K562 (cell line): ENCODE measurements at regions of chr11 and their contacts with region 1.

Region 1: GRCh38 chr11:2892215-2893020 is 6.8 kb upstream of the CDKN1C start:
- DNase-seq: peak; percentile 76 to 87 (median 80)
- ATAC-seq: peak; percentile 80
- H3K4me3 ChIP-seq: peak overlapping the region; percentile 34
- H3K27ac ChIP-seq: peak overlapping the region; percentile 63
- H3K4me1 ChIP-seq: peaks cover 30 to 65% of the 10 kb centered on the region in 2 experiments
- H3K27me3 ChIP-seq: no peaks in the 10 kb centered on the region
- CTCF ChIP-seq: peak; percentile 88 to 93 (median 93)
- EP300 ChIP-seq: no peak
- POLR2A ChIP-seq: peak; percentile 53
- RAD21 ChIP-seq: peak; percentile 90 to 91

Region 2: DNA sequence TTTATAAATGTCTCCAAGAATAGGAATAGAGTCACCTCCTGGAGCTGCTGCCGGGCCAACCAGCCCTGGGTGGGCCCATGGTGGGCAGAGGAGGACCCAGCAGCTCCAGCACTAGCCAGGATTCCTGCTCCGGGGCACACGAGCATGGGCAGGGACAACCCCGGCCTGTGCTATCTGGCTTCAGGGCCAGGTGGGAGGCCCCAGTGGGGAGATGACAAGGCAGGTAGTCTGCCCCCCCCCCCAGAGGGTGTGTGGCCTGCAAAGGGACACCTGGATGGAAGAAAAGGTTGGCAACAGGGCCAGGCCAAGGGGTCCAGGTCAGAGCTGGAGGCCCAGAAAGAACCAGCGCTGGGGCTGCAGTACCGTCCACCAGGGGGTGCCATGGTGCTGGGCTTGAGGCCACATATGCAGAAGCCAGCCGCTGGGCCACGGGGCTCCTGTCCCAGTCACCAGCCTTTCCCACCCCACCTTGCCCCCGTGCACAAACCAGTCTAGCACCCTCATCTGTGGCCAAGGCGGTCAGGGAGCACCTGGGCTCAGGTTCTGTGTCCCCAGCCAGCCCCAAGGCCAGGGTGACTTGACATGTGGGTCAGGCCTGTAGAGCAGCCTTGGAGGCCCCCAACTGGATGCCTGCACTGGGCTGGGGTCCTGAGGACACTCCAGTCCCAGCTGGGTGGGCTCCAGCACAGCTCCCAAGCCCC is 587.1 kb before region 1 on chr11:
- CTCF ChIA-PET with region 1: no interaction called
- POLR2A ChIA-PET with region 1: no interaction called
- in situ Hi-C with region 1: no loop called
- intact Hi-C with region 1: loop called (anchors 10 kb)
- DNase-seq: peak; percentile 66 to 88 (median 70)
- ATAC-seq: peak; percentile 81
- H3K4me3 ChIP-seq: peak overlapping the region; percentile 5; the same call in 1 of the 2 replicates
- H3K27ac ChIP-seq: peak overlapping the region; percentile 47; the same call in 2 of the 3 replicates
- H3K4me1 ChIP-seq: peaks cover 59 to 92% of the 10 kb centered on the region in 2 experiments
- H3K27me3 ChIP-seq: no peaks in the 10 kb centered on the region; a peak in 1 of 5 replicates
- CTCF ChIP-seq: peak; percentile 89 to 91 (median 91)
- EP300 ChIP-seq: no peak
- POLR2A ChIP-seq: no peak
- RAD21 ChIP-seq: peak; percentile 56 to 85

Region 3: DNA sequence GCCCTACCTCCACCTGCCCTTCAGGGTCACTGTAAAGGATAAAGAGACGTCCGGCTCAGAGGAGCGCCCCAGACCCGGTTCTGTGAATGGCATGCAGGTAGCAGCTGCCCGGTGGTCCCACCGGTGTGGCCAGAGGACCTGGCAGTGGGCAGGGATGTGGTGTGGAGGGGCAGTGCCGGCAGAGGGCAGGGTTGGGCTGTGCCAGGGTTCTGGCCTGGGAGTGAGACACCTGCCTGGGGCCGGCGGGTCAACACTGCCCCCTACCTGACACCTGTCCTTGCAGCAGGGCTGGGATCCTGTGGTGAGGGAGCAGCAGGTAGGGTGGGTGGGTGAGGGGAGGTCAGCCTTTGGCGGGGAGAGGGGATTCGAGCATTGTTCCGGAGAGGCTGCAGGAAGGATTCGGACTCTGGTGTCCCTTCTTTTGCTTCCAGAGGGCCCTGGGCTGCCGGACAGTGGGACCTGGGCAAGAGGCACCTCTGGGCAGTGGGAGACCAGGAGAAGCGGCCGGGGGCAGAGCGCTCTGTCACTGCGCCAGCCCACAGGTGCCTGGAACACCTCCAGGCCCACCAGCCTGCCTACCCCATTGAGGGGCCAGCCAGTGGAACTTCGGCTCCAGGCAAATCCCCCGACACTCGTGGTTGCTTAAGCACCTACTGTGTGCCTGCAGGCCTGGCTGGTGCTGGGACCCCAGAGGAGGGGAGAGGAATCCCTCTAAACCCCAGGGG is 38.4 kb after region 1 on chr11:
- CTCF ChIA-PET with region 1: interaction called, 6 read pairs
- POLR2A ChIA-PET with region 1: interaction called, 7 read pairs
- in situ Hi-C with region 1: no loop called
- intact Hi-C with region 1: loop called (anchors 1 kb)
- DNase-seq: peak; percentile 70 to 77 (median 74)
- ATAC-seq: peak; percentile 71
- H3K4me3 ChIP-seq: peak overlapping the region; percentile 76
- H3K27ac ChIP-seq: peak overlapping the region; percentile 73
- H3K4me1 ChIP-seq: peaks cover 10 to 66% of the 10 kb centered on the region in 2 experiments; a peak in 4 of 5 replicates
- H3K27me3 ChIP-seq: no peaks in the 10 kb centered on the region
- CTCF ChIP-seq: peak; percentile 78 to 99 (median 90)
- EP300 ChIP-seq: no peak
- POLR2A ChIP-seq: no peak
- RAD21 ChIP-seq: peak; percentile 53 to 80

Region 4: DNA sequence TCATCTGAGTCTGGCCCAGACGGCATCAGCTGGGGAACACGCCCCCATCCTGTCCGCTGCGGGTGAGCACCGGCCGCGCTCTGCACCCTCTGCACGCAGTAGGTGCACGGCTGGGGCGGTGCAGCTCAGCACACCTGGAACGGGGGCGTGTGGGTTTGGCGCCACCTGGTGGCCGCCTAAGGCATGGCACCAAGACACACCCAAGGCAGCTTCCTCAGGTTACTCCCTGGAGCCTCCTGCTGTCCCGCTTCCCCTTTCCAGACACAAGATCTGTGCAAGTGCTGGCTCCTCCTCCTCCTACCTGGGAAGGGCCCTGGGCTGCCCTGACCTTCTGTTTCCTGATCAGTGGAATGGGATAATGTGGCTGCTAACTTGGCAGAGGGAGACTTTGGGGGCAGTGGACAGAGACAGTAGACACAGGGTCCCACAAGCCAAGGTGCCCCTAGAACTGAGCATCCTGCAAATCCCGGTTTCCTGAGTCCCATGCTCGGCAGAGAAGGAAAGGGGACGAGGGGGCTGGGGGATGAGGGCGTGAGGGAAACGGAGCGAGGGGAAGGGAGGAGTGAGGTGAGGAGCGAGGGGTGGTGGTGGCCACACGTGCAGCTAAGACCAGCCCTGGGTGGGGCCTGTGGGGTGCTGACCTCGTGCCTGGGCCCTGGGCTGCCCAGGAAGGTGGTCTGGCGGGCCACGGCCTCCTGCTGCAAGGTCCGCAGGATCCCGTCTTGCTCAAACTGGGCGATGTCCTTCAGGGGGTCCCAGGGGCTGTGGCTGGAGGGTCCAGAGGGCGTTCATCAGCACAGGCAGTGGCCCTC is 199.6 kb after region 1 on chr11:
- CTCF ChIA-PET with region 1: no interaction called
- POLR2A ChIA-PET with region 1: no interaction called
- in situ Hi-C with region 1: no loop called
- intact Hi-C with region 1: loop called (anchors 10 kb)
- DNase-seq: peak; percentile 84 to 95 (median 91)
- ATAC-seq: peak; percentile 96
- H3K4me3 ChIP-seq: no peak overlapping the region
- H3K27ac ChIP-seq: no peak overlapping the region
- H3K4me1 ChIP-seq: peaks cover 0 to 50% of the 10 kb centered on the region in 2 experiments; a peak in 2 of 5 replicates
- H3K27me3 ChIP-seq: no peaks in the 10 kb centered on the region
- CTCF ChIP-seq: peak; percentile 97 to 99 (median 98)
- EP300 ChIP-seq: no peak
- POLR2A ChIP-seq: no peak
- RAD21 ChIP-seq: peak; percentile 97

Region 5: GRCh38 chr11:3412837-3413236 is 520.4 kb after region 1 on chr11:
- CTCF ChIA-PET with region 1: no interaction called
- POLR2A ChIA-PET with region 1: no interaction called
- in situ Hi-C with region 1: no loop called
- intact Hi-C with region 1: loop called (anchors 10 kb)
- DNase-seq: no peak
- ATAC-seq: no peak
- H3K4me3 ChIP-seq: no peak overlapping the region
- H3K27ac ChIP-seq: no peak overlapping the region
- H3K4me1 ChIP-seq: peaks cover 0 to 10% of the 10 kb centered on the region in 2 experiments; a peak in 2 of 5 replicates
- H3K27me3 ChIP-seq: no peaks in the 10 kb centered on the region
- CTCF ChIP-seq: no peak
- EP300 ChIP-seq: no peak
- POLR2A ChIP-seq: no peak
- RAD21 ChIP-seq: no peak